ENCODE measurements at regions of chr6 and their contacts with region 1.

Region 1: GRCh38 chr6:34610819-34611477 is 54.8 kb upstream of the SPDEF start:
- DNase-seq: peak; percentile 63
- H3K4me3 ChIP-seq: no peak overlapping the region
- CTCF ChIP-seq: no peak

Region 2: DNA sequence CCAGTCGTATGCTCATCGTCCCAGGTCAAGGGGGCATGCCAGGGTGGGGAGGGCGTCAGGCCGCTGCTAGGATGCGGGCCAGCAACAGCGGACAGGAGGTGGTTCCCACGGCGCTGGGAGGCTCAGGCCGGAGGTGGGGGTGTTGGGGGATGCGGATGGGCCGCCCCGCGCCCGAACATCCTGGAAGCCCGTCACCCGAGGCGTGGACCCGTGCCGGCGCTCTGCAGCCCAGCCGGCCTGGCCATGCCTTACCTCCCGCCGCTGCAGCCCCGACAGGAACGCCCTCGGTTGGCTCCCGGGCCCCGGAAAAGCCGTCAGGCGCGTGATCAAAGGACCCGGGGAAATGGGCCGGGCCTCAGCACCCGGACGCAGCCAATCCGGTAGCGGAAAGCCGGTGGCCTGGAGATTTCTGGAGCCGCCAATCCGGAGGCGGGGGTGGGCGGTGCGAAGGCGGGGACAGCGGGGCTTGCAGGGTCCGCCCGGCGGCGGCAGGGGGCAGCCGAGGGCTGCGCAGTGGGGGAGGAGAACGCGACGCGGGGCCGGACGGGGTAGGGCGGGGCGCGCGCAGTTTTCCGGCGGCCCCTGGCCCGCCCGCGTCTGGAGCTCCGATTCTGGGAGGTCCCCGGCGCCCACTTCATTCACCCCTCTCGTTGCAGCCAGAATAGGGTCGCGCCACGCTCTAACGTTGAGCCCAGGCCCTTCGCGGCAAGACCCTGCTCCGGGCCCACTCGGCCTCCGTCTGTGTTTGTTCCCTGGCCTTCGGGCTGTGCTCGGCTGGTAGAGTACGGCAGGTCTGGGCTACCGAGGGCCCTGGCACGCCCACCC is 362.0 kb before region 1 on chr6 and contains the start of gene SMIM29:
- CTCF ChIA-PET with region 1: interaction called, 38 read pairs
- POLR2A ChIA-PET with region 1: no interaction called
- DNase-seq: peak; percentile 57
- H3K4me3 ChIP-seq: peak within 1 kb of the TSS; percentile 87
- CTCF ChIP-seq: peak; percentile 90

Region 3: GRCh38 chr6:34425498-34426410 is 185.2 kb before region 1 on chr6 and contains the start of gene RPS10:
- CTCF ChIA-PET with region 1: interaction called, 19 read pairs
- POLR2A ChIA-PET with region 1: interaction called, 3 read pairs
- DNase-seq: peak; percentile 54
- H3K4me3 ChIP-seq: peak within 1 kb of the TSS; percentile 93
- CTCF ChIP-seq: no peak

Region 4: GRCh38 chr6:34526992-34527728 is 83.8 kb before region 1 on chr6:
- CTCF ChIA-PET with region 1: interaction called, 51 read pairs
- POLR2A ChIA-PET with region 1: no interaction called
- DNase-seq: peak; percentile 26
- H3K4me3 ChIP-seq: peak overlapping the region; percentile 48
- CTCF ChIP-seq: peak; percentile 90